ENCODE measurements at regions of chr15 and their contacts with region 1.

Region 1: DNA sequence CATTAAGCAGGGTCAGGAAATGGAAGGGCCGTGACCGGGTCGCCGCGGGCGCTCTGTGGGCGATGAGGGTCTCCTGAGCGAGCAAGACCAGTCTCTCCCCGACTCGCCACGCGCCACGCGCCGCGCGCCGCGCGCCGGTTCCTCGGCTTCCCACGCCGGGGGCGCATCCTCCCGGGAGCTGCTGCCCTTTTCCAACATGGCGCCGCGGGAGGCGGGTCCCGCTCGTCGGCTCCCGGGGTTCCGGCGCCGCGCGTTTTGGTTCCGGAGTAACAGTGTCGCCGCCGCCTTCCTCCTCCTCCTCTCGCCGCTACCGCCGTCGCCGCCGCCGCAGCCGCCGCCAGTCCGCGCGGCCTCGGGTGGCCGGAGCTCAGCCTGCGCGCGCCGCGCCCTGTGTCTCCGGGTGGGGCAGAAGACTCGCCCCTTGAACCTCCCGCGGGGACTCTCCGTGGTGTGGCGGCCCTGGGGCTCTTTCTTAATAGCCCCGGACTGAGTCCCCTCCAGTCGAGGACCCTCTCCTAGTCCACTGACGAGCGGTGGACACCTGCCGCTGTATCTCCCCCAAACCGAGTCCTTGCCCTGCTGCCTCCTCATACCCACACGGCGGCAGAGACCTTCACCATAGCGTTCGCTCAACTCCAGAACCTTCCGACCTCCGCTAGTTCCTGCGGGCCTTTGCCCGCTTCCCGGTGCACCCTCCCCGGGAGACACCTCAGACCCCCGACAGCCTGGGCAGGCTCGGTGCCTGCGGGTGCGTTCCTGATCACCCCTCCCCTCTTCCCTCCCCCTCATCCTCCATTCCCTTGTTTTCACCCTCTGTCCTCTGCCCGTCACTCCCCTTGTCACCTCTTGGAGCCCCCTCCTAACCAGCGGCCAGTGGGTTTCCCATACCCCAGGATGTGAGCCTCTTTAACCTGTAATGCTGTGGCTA is at the start of gene MAP2K5:
- DNase-seq: peak; percentile 77 to 86 (median 78)
- H3K4me3 ChIP-seq: peak within 1 kb of the TSS; percentile 79
- H3K4me3 Mint-ChIP-seq: peak within 1 kb of the TSS; percentile 92 to 99 (median 97)
- H3K27ac ChIP-seq: peak within 1 kb of the TSS; percentile 81
- H3K27ac Mint-ChIP-seq: peak within 1 kb of the TSS; percentile 96 to 99 (median 98)
- H3K4me1 ChIP-seq: peaks cover 26% of the 10 kb centered on the region
- H3K4me1 Mint-ChIP-seq: peaks cover 33 to 67% (median 51%) of the 10 kb centered on the region in 3 donors
- H3K27me3 ChIP-seq: no peaks in the 10 kb centered on the region
- H3K27me3 Mint-ChIP-seq: no peaks in the 10 kb centered on the region
- total RNA-seq, gene MAP2K5: 20.1 to 21.4 TPM

Region 2: GRCh38 chr15:67521029-67521811 is 21.5 kb before region 1 on chr15 and contains the start of gene C15orf61:
- CTCF ChIA-PET with region 1: interaction called, 4 read pairs
- POLR2A ChIA-PET with region 1: interaction called, 33 read pairs
- DNase-seq: peak; percentile 76 to 90 (median 87)
- H3K4me3 ChIP-seq: peak within 1 kb of the TSS; percentile 95
- H3K4me3 Mint-ChIP-seq: peak within 1 kb of the TSS; percentile 90 to 96 (median 93)
- H3K27ac ChIP-seq: peak within 1 kb of the TSS; percentile 78
- H3K27ac Mint-ChIP-seq: peak within 1 kb of the TSS; percentile 91 to 98 (median 96)
- H3K4me1 ChIP-seq: peaks cover 25% of the 10 kb centered on the region
- H3K4me1 Mint-ChIP-seq: peaks cover 28 to 48% (median 33%) of the 10 kb centered on the region in 3 donors
- H3K27me3 ChIP-seq: no peaks in the 10 kb centered on the region
- H3K27me3 Mint-ChIP-seq: peaks cover 0 to 3% of the 10 kb centered on the region in 2 donors
- total RNA-seq, gene C15orf61: 5.1 to 5.7 TPM

Region 3: GRCh38 chr15:67531379-67532059 is 11.2 kb before region 1 on chr15:
- CTCF ChIA-PET with region 1: no interaction called
- POLR2A ChIA-PET with region 1: no interaction called
- DNase-seq: no peak
- H3K4me3 ChIP-seq: no peak overlapping the region
- H3K4me3 Mint-ChIP-seq: no peak overlapping the region
- H3K27ac ChIP-seq: no peak overlapping the region
- H3K27ac Mint-ChIP-seq: no peak overlapping the region
- H3K4me1 ChIP-seq: no peaks in the 10 kb centered on the region
- H3K4me1 Mint-ChIP-seq: no peaks in the 10 kb centered on the region
- H3K27me3 ChIP-seq: no peaks in the 10 kb centered on the region
- H3K27me3 Mint-ChIP-seq: no peaks in the 10 kb centered on the region

Region 4: DNA sequence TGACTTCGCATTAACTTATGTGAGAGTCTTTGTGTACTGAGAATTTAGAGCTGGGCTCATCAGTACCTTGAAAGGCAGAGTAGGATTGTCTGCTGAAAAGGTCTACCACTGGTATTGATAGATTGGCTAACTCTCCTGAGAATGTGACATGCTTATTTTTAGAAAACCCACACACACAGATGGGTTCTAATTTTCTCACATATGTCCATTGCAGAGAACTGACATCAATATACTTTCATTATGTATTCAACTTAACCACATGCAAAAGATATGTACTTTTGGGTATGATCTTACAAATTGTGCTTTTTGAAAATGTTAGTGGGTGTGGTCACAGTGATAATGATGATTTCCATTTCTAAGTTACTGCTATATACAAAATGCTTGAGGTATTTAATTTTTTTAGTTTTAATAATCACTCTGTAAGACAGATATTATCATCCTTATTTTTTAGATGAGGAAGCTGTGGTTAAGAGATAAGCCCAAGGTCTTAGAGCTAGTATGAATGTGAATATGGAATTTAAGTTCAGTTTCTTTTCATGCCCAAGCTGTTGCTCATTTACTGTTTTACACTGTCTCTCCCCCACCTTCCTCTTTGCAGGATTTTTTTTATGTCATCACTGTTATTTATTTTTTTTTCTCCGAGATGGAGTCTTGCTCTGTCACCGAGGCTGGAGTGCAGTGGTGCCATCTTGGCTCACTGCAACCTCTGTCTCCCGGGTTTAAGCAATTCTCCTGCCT is 22.1 kb after region 1 on chr15:
- CTCF ChIA-PET with region 1: no interaction called
- POLR2A ChIA-PET with region 1: no interaction called
- DNase-seq: no peak
- H3K4me3 ChIP-seq: no peak overlapping the region
- H3K4me3 Mint-ChIP-seq: no peak overlapping the region
- H3K27ac ChIP-seq: no peak overlapping the region
- H3K27ac Mint-ChIP-seq: peak overlapping the region in 3 of 8 donors; percentile 5 to 42 (median 35)
- H3K4me1 ChIP-seq: no peaks in the 10 kb centered on the region
- H3K4me1 Mint-ChIP-seq: peaks cover 16 to 22% (median 19%) of the 10 kb centered on the region in 3 donors
- H3K27me3 ChIP-seq: no peaks in the 10 kb centered on the region
- H3K27me3 Mint-ChIP-seq: no peaks in the 10 kb centered on the region

Region 5: DNA sequence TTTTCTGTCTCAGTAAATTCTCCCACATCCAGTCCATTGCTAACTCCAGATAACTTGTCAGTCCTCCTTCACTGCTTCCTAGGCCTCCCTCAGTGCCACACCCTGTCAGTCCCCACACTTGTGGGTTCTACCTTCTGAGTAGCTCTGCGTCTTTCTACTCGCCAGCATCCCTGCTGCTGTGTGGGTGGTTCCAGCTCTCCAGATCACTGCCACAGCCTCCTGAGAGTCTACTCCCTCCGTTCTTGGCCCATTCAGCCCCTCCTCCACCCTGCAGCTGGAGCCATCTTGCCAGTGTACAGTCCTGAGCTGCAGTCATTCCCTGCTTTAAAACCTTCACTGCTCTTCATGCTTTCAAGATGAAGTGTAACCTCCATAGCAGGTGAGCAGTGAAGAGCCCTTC is 45.1 kb after region 1 on chr15:
- CTCF ChIA-PET with region 1: no interaction called
- POLR2A ChIA-PET with region 1: no interaction called
- DNase-seq: no peak
- H3K4me3 ChIP-seq: no peak overlapping the region
- H3K4me3 Mint-ChIP-seq: no peak overlapping the region
- H3K27ac ChIP-seq: no peak overlapping the region
- H3K27ac Mint-ChIP-seq: peak overlapping the region in 1 of 8 donors; percentile 51
- H3K4me1 ChIP-seq: no peaks in the 10 kb centered on the region
- H3K4me1 Mint-ChIP-seq: no peaks in the 10 kb centered on the region
- H3K27me3 ChIP-seq: no peaks in the 10 kb centered on the region
- H3K27me3 Mint-ChIP-seq: no peaks in the 10 kb centered on the region

Region 6: DNA sequence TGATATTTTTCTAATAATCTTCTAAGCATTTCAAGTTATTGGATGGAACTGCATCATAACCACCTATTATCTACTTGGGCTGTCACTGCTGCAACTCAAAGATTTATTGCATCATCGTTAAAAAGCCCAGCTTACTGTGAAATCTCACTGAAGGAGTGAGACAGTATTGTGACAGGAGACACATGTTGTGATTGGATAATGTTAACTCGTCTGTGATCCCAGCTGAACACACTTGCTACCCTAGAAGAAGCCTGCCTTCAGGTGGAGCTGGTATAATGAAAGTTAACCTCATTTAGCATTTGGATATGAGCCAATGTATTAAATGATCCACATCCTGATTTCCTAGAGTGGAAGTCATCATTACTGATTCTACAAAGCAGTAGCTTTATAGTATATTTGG is 138.0 kb after region 1 on chr15:
- CTCF ChIA-PET with region 1: no interaction called
- POLR2A ChIA-PET with region 1: no interaction called
- DNase-seq: no peak
- H3K4me3 ChIP-seq: no peak overlapping the region
- H3K4me3 Mint-ChIP-seq: no peak overlapping the region
- H3K27ac ChIP-seq: no peak overlapping the region
- H3K27ac Mint-ChIP-seq: no peak overlapping the region
- H3K4me1 ChIP-seq: no peaks in the 10 kb centered on the region
- H3K4me1 Mint-ChIP-seq: no peaks in the 10 kb centered on the region
- H3K27me3 ChIP-seq: no peaks in the 10 kb centered on the region
- H3K27me3 Mint-ChIP-seq: no peaks in the 10 kb centered on the region